ENCODE measurements at regions of chr7 and their contacts with region 1.

Region 1: GRCh38 chr7:149873074-149873969 is at the start of gene ATP6V0E2:
- DNase-seq: peak; percentile 88 to 97
- H3K4me3 ChIP-seq: peak within 1 kb of the TSS; percentile 75
- H3K27ac ChIP-seq: no peak within 1 kb of the TSS
- H3K4me1 ChIP-seq: peaks cover 5% of the 10 kb centered on the region; the same call in 1 of the 2 replicates
- H3K27me3 ChIP-seq: no peaks in the 10 kb centered on the region
- CTCF ChIP-seq: no peak
- total RNA-seq, gene ATP6V0E2: 35.6 and 40.7 TPM in 2 replicates

Region 2: DNA sequence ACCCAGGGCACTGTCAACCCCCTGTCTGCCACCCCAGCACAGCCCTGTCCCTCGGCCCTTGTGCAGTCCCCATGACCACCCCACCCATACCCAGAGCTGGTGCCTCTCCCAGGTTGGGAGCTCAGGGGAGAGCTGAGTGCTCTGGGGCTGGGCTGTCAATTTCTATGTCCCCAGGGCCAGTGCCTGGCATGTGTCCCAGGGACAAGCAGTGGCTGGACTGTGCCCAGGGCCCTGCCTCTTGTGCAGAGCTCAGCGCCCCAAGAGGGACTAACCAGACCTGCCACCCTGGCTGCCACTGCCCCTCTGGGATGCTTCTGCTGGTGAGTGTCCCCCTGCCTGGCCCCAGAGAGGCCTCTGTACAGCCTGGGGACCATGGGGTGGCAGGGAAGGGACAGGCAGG is 64.1 kb before region 1 on chr7:
- CTCF ChIA-PET with region 1: no interaction called
- POLR2A ChIA-PET with region 1: no interaction called
- intact Hi-C with region 1: loop called (anchors 5 kb)
- DNase-seq: no peak
- H3K4me3 ChIP-seq: no peak overlapping the region
- H3K27ac ChIP-seq: no peak overlapping the region
- H3K4me1 ChIP-seq: no peaks in the 10 kb centered on the region
- H3K27me3 ChIP-seq: peaks cover 64% of the 10 kb centered on the region
- CTCF ChIP-seq: no peak

Region 3: DNA sequence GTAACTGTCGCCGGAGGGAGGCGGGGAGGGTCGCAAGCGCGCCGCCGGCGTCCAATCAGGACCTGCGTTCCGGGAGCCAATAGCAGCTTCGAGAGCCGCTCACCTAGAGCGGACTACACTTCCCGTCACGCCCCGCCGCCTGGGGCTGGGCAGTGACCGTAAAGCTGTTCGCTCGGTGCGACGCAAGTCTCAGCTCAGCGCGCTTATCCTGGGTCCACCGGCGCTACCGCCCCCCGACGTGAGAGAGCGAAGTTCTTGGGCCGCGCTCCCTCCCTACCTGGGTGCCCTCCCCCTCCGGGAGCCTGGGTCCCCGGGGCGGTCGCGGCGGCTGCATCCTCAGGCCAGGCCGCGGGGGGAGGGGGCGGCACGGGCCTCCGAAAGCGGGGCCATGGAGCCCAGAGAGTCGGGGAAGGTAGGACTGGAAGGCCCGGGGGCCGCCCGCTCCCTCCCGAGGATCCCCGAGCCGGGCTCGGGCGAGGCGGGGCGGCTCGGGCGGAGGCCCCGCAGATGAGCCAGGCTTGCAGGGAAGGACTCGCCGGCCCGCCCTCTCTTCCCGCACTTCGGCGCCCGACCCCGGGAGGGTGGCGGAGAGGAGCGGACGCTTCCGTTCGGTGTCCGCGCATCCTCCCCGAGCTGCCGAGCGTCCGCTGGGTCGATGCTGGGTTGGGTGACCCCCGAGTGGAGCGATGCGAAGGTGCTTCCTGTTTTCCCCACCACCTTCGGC is 34.9 kb before region 1 on chr7 and contains the start of gene ZNF862:
- CTCF ChIA-PET with region 1: no interaction called
- POLR2A ChIA-PET with region 1: no interaction called
- intact Hi-C with region 1: loop called (anchors 1 kb)
- DNase-seq: peak; percentile 95 to 98
- H3K4me3 ChIP-seq: peak within 1 kb of the TSS; percentile 99
- H3K27ac ChIP-seq: no peak within 1 kb of the TSS
- H3K4me1 ChIP-seq: peaks cover 9% of the 10 kb centered on the region
- H3K27me3 ChIP-seq: peaks cover 16% of the 10 kb centered on the region
- CTCF ChIP-seq: no peak; the same call in 1 of the 2 replicates
- total RNA-seq, gene ZNF862: 42.4 and 43.6 TPM in 2 replicates

Region 4: DNA sequence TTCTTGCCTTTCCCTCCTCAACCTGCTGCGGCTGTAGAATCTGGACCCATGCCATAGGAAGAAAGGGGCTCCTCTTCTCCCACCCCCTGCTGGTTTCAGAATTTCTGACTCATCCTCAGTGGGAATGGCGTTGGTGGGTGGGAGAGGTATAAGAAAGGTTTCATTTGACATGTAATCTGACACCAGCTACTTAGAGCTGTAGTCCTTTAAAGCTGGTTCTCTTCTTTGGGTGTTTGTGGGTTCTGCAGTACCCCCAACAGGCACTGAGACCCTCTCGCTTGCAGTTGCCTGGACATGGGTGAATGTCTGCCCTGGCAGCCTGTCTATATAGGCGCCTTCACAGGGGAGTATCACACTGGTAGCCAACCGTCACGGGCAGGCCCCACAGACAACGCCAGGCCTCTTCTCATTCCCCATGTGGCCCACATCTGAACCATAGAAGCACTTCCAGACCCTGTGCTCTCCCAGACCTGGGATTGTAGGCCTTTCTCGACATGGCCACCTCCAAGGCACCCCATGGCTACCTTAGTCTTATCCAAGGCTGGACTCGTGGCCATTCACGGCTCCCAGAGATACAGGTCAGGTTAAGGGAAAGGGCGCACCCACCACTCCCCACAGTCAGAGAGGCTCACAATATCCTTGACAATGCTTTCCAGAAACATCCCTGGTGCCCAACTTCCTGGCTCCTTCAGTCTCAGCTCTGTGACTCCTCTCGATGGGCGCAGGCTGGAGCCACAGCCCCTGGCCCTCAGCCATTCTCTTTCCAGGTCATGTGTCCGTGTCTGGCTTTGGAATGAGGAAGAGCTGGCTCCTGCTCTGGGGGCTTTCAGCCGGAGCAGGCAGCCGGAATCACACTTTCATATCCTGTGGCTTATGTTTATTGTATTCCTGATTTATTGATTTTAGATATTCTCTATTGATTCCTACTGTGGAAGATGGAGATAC is 17.7 kb before region 1 on chr7:
- CTCF ChIA-PET with region 1: no interaction called
- POLR2A ChIA-PET with region 1: no interaction called
- intact Hi-C with region 1: loop called (anchors 1 kb)
- DNase-seq: peak; percentile 78 to 83
- H3K4me3 ChIP-seq: no peak overlapping the region
- H3K27ac ChIP-seq: peak overlapping the region; percentile 30; the same call in 1 of the 2 replicates
- H3K4me1 ChIP-seq: peaks cover 21% of the 10 kb centered on the region
- H3K27me3 ChIP-seq: no peaks in the 10 kb centered on the region
- CTCF ChIP-seq: no peak